H1 (cell line): ENCODE measurements at regions of chr17 and their contacts with region 1.

Region 1: GRCh38 chr17:73984941-73985340 is 218.5 kb upstream of the RPL38 start:
- DNase-seq: no peak
- H3K4me3 ChIP-seq: no peak overlapping the region
- H3K27ac ChIP-seq: no peak overlapping the region
- H3K4me1 ChIP-seq: peaks cover 0 to 2% (median 0%) of the 10 kb centered on the region in 4 experiments; a peak in 2 of 7 replicates
- H3K27me3 ChIP-seq: 0 out of 7 replicates have a peak, but pooled peaks cover 0 to 2% (median 0%) of the 10 kb centered on the region in 4 experiments
- CTCF ChIP-seq: no peak
- EP300 ChIP-seq: no peak
- POLR2A ChIP-seq: no peak
- RAD21 ChIP-seq: no peak

Region 2: GRCh38 chr17:73782641-73783381 is 202.1 kb before region 1 on chr17:
- CTCF ChIA-PET with region 1: no interaction called
- POLR2A ChIA-PET with region 1: no interaction called
- DNase-seq: no peak
- H3K4me3 ChIP-seq: no peak overlapping the region
- H3K27ac ChIP-seq: no peak overlapping the region
- H3K4me1 ChIP-seq: peaks cover 7 to 32% (median 16%) of the 10 kb centered on the region in 4 experiments
- H3K27me3 ChIP-seq: no peaks in the 10 kb centered on the region; a peak in 1 of 7 replicates
- CTCF ChIP-seq: peak; percentile 70 to 87 (median 86)
- EP300 ChIP-seq: no peak
- POLR2A ChIP-seq: no peak
- RAD21 ChIP-seq: peak; percentile 80 to 90

Region 3: GRCh38 chr17:74008196-74008595 is 23.3 kb after region 1 on chr17:
- CTCF ChIA-PET with region 1: interaction called, 17 read pairs
- POLR2A ChIA-PET with region 1: no interaction called
- DNase-seq: peak; percentile 21 to 63
- H3K4me3 ChIP-seq: no peak overlapping the region
- H3K27ac ChIP-seq: no peak overlapping the region
- H3K4me1 ChIP-seq: peaks cover 0 to 9% (median 5%) of the 10 kb centered on the region in 4 experiments; a peak in 6 of 7 replicates
- H3K27me3 ChIP-seq: no peaks in the 10 kb centered on the region
- CTCF ChIP-seq: peak; percentile 55 to 86 (median 74)
- EP300 ChIP-seq: no peak
- POLR2A ChIP-seq: no peak
- RAD21 ChIP-seq: peak; percentile 47 to 59